ENCODE measurements at regions of chr6 and their contacts with region 1.

Region 1: DNA sequence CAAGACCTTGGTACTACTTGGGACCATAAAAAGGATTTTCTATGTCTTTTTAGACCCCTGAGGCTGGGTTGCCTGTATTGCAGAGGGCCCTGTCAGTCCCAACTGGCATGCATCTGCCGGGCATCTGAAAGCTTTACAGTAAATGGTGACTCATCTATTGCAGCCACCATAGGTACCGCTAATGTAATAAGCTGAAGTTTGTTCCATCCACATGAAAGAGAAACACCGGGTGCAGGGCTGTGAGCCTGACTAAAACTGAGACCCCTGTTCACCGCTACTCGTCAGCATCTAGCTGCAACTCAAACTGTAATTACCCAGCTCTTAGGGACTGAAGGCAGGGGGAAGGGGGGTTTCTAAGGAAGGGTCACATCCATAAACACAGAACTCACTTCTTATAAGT is 49.5 kb downstream of the TRERF1 start:
- DNase-seq: peak; percentile 85
- H3K4me3 Mint-ChIP-seq: no peak overlapping the region
- H3K27ac Mint-ChIP-seq: peak overlapping the region; percentile 76
- H3K4me1 Mint-ChIP-seq: peaks cover 81% of the 10 kb centered on the region
- H3K27me3 Mint-ChIP-seq: no peaks in the 10 kb centered on the region

Region 2: DNA sequence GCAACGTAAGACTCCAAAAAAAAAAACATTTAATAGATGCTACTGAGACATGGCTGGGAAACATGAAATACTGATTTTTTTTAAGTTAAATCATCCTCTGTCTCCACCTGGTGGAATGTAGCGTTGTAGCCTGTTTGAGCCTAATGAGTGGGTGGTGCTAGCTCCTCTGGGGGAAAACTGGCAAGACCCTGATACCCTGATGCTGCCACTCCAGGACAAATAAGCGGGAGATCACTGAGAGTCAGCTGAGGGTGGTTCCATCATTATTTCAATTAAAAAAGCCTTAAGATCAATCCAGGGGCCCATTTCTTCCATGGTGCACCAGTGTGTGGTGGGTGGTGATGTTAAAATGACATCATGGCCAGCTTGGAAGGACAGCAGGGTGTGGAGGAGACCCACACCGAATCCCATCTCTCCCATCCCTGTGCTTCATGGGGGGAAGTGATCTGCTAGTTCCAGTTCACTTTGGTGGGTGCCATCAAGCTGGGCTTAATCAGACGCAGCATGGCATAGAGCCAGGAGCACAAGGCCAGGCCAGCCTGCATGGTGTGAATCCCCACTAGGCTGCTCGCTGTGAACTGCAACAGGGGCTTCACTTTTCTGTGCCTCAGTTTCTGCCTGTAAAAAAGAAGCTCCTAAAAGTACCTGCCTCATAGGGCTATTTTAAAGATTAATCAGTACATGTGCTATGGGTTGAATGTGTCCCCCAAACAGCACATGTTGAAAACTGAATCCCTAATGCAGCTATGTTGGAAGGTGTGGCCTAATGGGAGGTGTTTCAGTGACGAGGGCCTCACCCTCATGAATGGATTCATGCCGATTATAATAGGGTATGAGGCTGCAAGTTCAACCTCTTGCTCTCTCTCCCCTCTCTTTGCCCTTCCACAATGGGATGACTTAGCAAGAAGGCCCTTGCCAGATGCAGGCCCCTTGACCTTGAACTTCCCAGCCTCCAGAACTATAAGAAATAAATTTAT is 171.6 kb before region 1 on chr6:
- CTCF ChIA-PET with region 1: no interaction called
- POLR2A ChIA-PET with region 1: no interaction called
- intact Hi-C with region 1: no loop called
- DNase-seq: no peak
- H3K4me3 Mint-ChIP-seq: no peak overlapping the region
- H3K27ac Mint-ChIP-seq: peak overlapping the region; percentile 23
- H3K4me1 Mint-ChIP-seq: peaks cover 4% of the 10 kb centered on the region
- H3K27me3 Mint-ChIP-seq: no peaks in the 10 kb centered on the region

Region 3: GRCh38 chr6:42255050-42255449 is 147.1 kb before region 1 on chr6:
- CTCF ChIA-PET with region 1: no interaction called
- POLR2A ChIA-PET with region 1: no interaction called
- intact Hi-C with region 1: no loop called
- DNase-seq: peak; percentile 55
- H3K4me3 Mint-ChIP-seq: no peak overlapping the region
- H3K27ac Mint-ChIP-seq: peak overlapping the region; percentile 70
- H3K4me1 Mint-ChIP-seq: peaks cover 14% of the 10 kb centered on the region
- H3K27me3 Mint-ChIP-seq: no peaks in the 10 kb centered on the region

Region 4: GRCh38 chr6:42423244-42423643 is 21.1 kb after region 1 on chr6:
- CTCF ChIA-PET with region 1: interaction called, 7 read pairs
- POLR2A ChIA-PET with region 1: interaction called, 10 read pairs
- intact Hi-C with region 1: loop called (anchors 2 kb)
- DNase-seq: peak; percentile 74
- H3K4me3 Mint-ChIP-seq: peak overlapping the region; percentile 18
- H3K27ac Mint-ChIP-seq: peak overlapping the region; percentile 72
- H3K4me1 Mint-ChIP-seq: peaks cover 57% of the 10 kb centered on the region
- H3K27me3 Mint-ChIP-seq: no peaks in the 10 kb centered on the region

Region 5: DNA sequence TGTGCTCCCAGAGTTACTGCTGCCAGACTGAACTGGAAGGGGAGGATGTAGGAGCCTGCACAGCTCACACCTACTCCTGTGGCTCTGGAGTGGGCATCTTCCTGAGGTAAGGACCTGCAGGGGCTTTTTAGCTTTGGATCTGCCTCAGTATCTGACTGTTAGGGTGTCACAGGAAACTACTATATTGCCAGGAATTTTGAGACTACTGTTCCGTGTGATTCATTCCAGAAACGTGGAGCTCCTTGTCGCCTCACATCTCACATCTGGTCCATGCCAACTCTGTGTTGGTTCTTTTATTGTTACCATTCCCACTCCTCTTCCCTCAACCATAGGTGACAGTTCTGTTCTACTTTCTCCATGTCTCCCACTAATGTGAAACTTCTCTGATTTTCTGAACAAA is 286.1 kb after region 1 on chr6:
- CTCF ChIA-PET with region 1: no interaction called
- POLR2A ChIA-PET with region 1: no interaction called
- intact Hi-C with region 1: no loop called
- DNase-seq: no peak
- H3K4me3 Mint-ChIP-seq: no peak overlapping the region
- H3K27ac Mint-ChIP-seq: no peak overlapping the region
- H3K4me1 Mint-ChIP-seq: peaks cover 13% of the 10 kb centered on the region
- H3K27me3 Mint-ChIP-seq: no peaks in the 10 kb centered on the region

Measured in activated CD4-positive, alpha-beta memory T cell treated with anti-CD3 and anti-CD28 coated beads for 36 hours (primary cell).